ENCODE measurements at regions of chr1 and their contacts with region 1.

Region 1: GRCh38 chr1:9084906-9085305 is 15.5 kb upstream of the SLC2A5 start:
- DNase-seq: peak; percentile 40
- H3K4me3 ChIP-seq: no peak overlapping the region
- H3K27ac ChIP-seq: no peak overlapping the region
- H3K4me1 ChIP-seq: peaks cover 34% of the 10 kb centered on the region
- H3K27me3 ChIP-seq: no peaks in the 10 kb centered on the region
- CTCF ChIP-seq: no peak

Region 2: DNA sequence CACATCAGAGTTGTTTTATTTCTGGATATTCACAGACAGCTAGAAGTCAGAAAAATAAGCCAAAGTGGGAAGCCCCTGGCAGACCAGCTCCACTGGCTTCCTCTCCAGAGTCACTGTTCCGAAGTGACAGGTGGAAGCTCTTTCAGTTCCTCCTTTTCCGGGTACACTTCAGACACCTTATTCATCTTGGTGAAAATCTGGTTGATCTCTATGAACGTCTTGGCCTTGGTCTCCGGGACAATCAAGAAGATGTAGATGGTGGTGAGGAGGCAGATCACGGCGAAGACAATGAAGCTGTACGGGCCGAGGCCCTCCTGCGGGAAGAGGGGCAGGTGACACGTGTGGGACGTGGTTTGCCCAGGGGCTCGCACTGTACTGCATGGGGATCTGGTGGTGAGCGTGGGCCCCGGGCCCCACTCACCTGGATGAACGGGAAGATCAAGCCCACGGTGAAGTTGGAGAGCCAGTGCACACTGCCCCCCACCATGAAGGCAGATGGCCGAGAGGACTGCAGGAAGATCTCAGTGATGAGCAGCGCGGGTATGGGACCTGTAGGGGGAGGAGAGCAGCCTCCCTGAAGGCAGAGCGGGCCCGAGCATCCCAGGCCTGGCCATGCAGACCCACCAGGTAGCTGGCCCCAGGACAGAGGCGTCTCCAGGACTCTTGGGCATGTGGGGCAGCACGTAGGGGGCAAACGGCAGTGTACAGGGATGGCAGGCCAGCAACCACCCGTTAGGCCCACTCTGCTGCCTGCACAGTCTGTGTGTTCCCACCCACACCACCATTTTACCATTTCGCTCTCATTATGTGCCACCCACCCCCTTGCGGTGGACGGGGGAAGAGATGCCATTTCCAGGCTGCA is 47.2 kb before region 1 on chr1:
- CTCF ChIA-PET with region 1: no interaction called
- dilution Hi-C with region 1: loop called (anchors 5 kb)
- in situ Hi-C with region 1: no loop called
- intact Hi-C with region 1: no loop called
- DNase-seq: no peak
- H3K4me3 ChIP-seq: no peak overlapping the region
- H3K27ac ChIP-seq: no peak overlapping the region
- H3K4me1 ChIP-seq: peaks cover 19% of the 10 kb centered on the region
- H3K27me3 ChIP-seq: peaks cover 5% of the 10 kb centered on the region
- CTCF ChIP-seq: no peak

Region 3: DNA sequence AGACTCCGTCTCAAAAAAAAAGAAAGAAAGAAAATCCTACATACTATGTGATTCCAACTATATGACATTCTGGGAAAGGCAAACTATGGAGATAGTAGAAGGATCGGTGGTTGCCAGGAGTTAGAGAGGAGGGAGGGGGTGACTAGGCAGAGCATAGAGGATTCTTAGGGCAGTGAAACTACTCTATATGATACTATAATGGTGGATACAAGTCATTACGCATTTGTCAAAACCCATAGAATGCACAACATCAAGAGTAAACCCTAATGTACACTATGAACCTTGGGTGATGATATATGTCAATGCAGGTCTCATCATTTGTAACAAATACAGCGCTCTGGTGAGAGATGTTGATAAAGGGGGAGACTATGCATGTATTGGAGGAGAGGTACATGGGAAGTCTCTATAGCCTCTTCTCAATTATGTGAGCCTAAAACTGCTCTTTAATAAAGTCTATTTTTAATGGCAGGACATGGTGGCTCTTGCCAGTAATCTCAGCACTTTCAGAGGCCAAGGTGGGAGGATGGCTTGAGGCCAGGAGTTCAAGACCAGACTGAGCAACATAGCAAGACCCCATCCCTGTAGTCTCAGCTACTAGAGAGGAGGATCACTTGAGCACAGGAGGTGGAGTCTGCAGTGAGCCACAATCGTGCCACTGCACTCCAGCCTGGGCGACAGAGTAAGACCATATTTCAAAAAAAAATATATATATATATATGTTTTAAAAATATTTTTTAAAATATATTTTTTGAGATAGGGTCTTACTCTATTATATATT is 32.4 kb before region 1 on chr1:
- CTCF ChIA-PET with region 1: no interaction called
- dilution Hi-C with region 1: no loop called
- in situ Hi-C with region 1: no loop called
- intact Hi-C with region 1: no loop called
- DNase-seq: no peak
- H3K4me3 ChIP-seq: no peak overlapping the region
- H3K27ac ChIP-seq: no peak overlapping the region
- H3K4me1 ChIP-seq: no peaks in the 10 kb centered on the region
- H3K27me3 ChIP-seq: no peaks in the 10 kb centered on the region
- CTCF ChIP-seq: no peak

Region 4: DNA sequence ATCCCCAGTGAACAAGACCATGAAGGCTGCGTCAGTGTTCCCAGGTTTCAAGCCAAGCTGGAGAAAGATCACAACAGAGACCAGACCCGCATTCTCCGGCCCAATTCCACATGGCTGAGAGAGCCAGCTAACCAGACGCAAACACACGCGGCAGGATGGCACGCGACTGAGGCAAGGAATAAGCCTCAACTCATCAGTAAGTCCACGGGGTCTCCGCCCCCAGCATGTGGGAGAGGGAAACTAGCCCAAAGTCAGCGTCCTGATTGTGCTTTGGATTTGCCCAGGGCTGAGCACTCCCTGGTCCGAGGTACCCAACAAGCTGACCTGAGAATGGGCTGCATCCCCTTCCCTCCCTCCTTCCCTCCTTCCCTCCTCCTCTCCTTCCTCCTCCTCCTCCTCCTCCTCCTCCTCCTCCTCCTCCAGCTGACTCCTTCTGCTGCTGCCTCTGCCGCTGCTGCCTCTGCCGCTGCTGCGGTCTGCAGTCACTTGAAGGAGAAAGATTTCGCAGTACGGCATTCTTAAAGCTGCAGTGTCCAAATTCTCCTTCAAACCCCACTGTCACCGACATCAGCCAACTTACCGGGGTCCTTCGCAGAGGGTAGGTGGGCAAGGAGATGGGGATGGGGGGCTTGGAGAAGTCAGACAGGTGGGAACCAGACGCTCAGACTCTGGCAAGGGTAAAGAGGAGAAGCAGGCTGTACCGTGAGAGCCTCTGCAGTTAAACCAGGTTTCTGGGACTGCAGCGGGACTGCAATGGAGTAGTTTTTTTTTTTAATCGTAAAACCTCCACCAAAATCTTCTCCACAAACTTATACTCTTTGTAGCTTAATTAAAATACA is 116.7 kb after region 1 on chr1:
- CTCF ChIA-PET with region 1: no interaction called
- dilution Hi-C with region 1: no loop called
- in situ Hi-C with region 1: no loop called
- intact Hi-C with region 1: no loop called
- DNase-seq: peak; percentile 41
- H3K4me3 ChIP-seq: peak overlapping the region; percentile 54 to 61 (median 54)
- H3K27ac ChIP-seq: no peak overlapping the region
- H3K4me1 ChIP-seq: peaks cover 54% of the 10 kb centered on the region
- H3K27me3 ChIP-seq: no peaks in the 10 kb centered on the region
- CTCF ChIP-seq: no peak

Region 5: DNA sequence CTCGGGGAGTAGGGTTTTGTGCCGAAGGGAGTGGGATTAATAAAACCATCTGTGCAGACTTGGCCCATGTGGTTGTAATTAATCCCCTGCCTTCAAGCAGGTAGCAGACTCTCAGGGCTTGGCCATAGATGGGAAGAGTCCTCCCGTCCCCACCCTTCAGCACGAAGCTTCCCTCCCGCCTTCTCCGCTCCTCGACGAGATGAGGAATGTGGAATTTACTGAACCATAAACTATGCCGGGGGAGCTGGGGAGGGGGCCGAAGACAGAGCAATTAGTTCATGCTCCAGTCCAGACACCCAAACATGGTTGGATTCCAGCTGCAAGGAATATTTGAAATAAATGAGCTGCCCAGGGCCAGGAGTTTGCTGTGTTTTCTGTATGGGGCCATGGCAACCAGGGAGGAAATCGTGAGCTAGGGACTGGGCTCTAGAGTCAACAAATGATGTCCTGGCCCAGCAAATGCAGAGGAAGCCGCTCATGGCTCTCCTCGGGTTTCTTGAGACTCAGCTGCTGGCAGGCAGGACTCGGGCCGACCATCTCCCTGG is 286.6 kb after region 1 on chr1:
- CTCF ChIA-PET with region 1: no interaction called
- dilution Hi-C with region 1: no loop called
- in situ Hi-C with region 1: no loop called
- intact Hi-C with region 1: no loop called
- DNase-seq: no peak
- H3K4me3 ChIP-seq: no peak overlapping the region
- H3K27ac ChIP-seq: no peak overlapping the region
- H3K4me1 ChIP-seq: peaks cover 10% of the 10 kb centered on the region
- H3K27me3 ChIP-seq: no peaks in the 10 kb centered on the region
- CTCF ChIP-seq: no peak